ENCODE measurements at regions of chr15 and their contacts with region 1.

Region 1: GRCh38 chr15:51649659-51650521 is 27.3 kb upstream of the DMXL2 start:
- DNase-seq: peak; percentile 63
- ATAC-seq: peak; percentile 96
- H3K4me3 ChIP-seq: no peak overlapping the region
- H3K27ac ChIP-seq: no peak overlapping the region
- H3K4me1 ChIP-seq: peaks cover 3% of the 10 kb centered on the region; the same call in 1 of the 2 replicates
- H3K27me3 ChIP-seq: 0 out of 4 replicates have a peak, but pooled peaks cover 0 to 2% of the 10 kb centered on the region in 2 experiments
- CTCF ChIP-seq: peak; percentile 60 to 85 (median 69)
- EP300 ChIP-seq: no peak
- POLR2A ChIP-seq: no peak
- RAD21 ChIP-seq: peak; percentile 99

Region 2: DNA sequence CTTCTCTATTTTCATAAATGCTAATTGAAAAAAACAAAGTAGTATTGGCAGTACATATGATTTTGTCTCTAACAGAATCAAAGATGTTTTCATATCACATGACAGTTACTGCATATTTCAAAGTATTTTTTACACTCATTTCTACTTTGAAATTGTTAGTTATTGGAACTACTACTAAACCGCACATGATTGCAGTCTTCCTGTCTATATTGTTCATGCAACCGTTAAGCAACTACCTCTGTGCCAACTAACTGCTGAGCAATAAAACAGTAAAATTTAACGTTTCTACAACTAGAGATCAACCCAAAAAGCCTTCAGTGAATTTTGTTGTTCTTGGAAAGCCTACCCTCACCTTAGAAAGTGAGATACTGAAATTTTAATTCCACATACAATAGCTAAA is 91.5 kb before region 1 on chr15:
- CTCF ChIA-PET with region 1: no interaction called
- POLR2A ChIA-PET with region 1: no interaction called
- RAD21 ChIA-PET with region 1: no interaction called
- SMC1A ChIA-PET with region 1: no interaction called
- in situ Hi-C with region 1: no loop called
- intact Hi-C with region 1: no loop called
- DNase-seq: no peak
- ATAC-seq: no peak
- H3K4me3 ChIP-seq: no peak overlapping the region
- H3K27ac ChIP-seq: no peak overlapping the region
- H3K4me1 ChIP-seq: no peaks in the 10 kb centered on the region
- H3K27me3 ChIP-seq: no peaks in the 10 kb centered on the region
- CTCF ChIP-seq: no peak
- EP300 ChIP-seq: no peak
- POLR2A ChIP-seq: no peak
- RAD21 ChIP-seq: no peak

Region 3: DNA sequence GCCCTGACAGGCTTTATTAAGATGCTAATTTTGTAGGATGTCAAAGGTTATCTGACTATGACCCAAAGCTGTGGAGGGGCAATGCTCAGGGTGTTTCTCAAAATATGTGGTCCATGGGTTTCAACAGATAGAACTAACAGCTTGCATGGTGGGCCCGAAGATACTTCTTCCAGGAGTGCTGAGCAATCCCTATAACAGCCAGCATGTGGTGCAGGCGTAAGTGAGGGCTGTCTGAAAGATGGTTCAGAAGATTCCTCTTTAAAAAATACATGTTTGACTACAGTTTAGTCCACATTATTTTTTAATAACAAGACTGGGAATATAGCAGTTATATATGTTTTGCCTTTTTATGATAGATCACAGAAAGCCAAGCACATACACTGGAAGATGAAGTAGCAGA is 39.0 kb after region 1 on chr15:
- CTCF ChIA-PET with region 1: interaction called, 13 read pairs
- POLR2A ChIA-PET with region 1: no interaction called
- RAD21 ChIA-PET with region 1: interaction called, 4 read pairs
- SMC1A ChIA-PET with region 1: interaction called, 6 read pairs
- in situ Hi-C with region 1: no loop called
- intact Hi-C with region 1: no loop called
- DNase-seq: no peak
- ATAC-seq: peak; percentile 65; the same call in 2 of the 3 replicates
- H3K4me3 ChIP-seq: no peak overlapping the region
- H3K27ac ChIP-seq: no peak overlapping the region
- H3K4me1 ChIP-seq: no peaks in the 10 kb centered on the region
- H3K27me3 ChIP-seq: peaks cover 0 to 4% of the 10 kb centered on the region in 2 experiments; a peak in 1 of 4 replicates
- CTCF ChIP-seq: peak; percentile 13 to 23 (median 21); a peak in 2 of 6 replicates
- EP300 ChIP-seq: no peak
- POLR2A ChIP-seq: no peak
- RAD21 ChIP-seq: no peak

Region 4: DNA sequence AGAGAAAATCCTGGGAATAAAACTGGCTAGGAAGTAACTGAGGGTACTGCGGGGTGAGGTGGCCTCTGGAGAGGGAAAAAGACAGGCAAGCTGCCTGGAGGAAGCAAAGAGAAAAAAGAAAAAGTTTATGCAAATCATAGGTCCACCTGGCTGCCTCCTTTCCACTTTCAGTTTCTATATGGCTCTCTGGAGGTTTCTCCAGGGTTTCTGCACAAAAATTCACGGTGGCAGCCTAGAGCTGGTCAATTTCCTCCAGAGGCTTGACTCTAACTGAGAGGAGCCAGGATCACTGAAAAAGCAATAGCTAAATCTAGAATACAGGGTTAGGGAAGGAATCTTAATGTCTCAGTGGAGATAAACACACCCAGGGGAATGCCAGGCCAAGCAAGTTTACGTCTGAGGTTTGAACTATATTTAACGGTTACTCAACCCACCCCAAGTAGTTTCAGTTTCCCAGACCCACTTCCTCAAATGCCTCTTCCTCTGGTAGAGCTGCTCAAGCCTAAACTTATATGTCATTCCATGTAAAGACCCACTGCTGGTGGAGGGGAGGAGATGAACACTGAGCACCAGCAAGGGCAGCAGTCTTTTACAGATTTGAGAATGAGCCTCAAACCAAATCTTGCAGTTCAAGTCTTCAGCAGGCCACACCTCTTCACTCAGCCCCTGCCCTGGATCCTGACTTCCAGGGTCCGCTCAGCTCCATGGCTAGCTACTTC is 81.8 kb after region 1 on chr15:
- CTCF ChIA-PET with region 1: interaction called, 82 read pairs
- POLR2A ChIA-PET with region 1: no interaction called
- RAD21 ChIA-PET with region 1: interaction called, 33 read pairs
- SMC1A ChIA-PET with region 1: interaction called, 52 read pairs
- in situ Hi-C with region 1: no loop called
- intact Hi-C with region 1: loop called (anchors 1 kb)
- DNase-seq: peak; percentile 90
- ATAC-seq: peak; percentile 61
- H3K4me3 ChIP-seq: peak overlapping the region; percentile 63
- H3K27ac ChIP-seq: peak overlapping the region; percentile 94
- H3K4me1 ChIP-seq: peaks cover 57% of the 10 kb centered on the region
- H3K27me3 ChIP-seq: no peaks in the 10 kb centered on the region
- CTCF ChIP-seq: no peak
- EP300 ChIP-seq: peak; percentile 49 to 70; a peak in 3 of 4 replicates
- POLR2A ChIP-seq: 0 out of 2 replicates have a peak, but pooled peaks have one; percentile 38
- RAD21 ChIP-seq: no peak; the same call in 1 of the 2 replicates

Region 5: GRCh38 chr15:51759557-51760070 is 109.7 kb after region 1 on chr15:
- CTCF ChIA-PET with region 1: interaction called, 21 read pairs
- POLR2A ChIA-PET with region 1: no interaction called
- RAD21 ChIA-PET with region 1: interaction called, 8 read pairs
- SMC1A ChIA-PET with region 1: interaction called, 6 read pairs
- in situ Hi-C with region 1: no loop called
- intact Hi-C with region 1: no loop called
- DNase-seq: no peak
- ATAC-seq: peak; percentile 74
- H3K4me3 ChIP-seq: no peak overlapping the region
- H3K27ac ChIP-seq: no peak overlapping the region
- H3K4me1 ChIP-seq: no peaks in the 10 kb centered on the region
- H3K27me3 ChIP-seq: no peaks in the 10 kb centered on the region
- CTCF ChIP-seq: peak; percentile 24 to 52 (median 41); a peak in 4 of 6 replicates
- EP300 ChIP-seq: no peak
- POLR2A ChIP-seq: no peak
- RAD21 ChIP-seq: no peak